H1 (cell line): ENCODE measurements at regions of chr2 and their contacts with region 1.

Region 1: DNA sequence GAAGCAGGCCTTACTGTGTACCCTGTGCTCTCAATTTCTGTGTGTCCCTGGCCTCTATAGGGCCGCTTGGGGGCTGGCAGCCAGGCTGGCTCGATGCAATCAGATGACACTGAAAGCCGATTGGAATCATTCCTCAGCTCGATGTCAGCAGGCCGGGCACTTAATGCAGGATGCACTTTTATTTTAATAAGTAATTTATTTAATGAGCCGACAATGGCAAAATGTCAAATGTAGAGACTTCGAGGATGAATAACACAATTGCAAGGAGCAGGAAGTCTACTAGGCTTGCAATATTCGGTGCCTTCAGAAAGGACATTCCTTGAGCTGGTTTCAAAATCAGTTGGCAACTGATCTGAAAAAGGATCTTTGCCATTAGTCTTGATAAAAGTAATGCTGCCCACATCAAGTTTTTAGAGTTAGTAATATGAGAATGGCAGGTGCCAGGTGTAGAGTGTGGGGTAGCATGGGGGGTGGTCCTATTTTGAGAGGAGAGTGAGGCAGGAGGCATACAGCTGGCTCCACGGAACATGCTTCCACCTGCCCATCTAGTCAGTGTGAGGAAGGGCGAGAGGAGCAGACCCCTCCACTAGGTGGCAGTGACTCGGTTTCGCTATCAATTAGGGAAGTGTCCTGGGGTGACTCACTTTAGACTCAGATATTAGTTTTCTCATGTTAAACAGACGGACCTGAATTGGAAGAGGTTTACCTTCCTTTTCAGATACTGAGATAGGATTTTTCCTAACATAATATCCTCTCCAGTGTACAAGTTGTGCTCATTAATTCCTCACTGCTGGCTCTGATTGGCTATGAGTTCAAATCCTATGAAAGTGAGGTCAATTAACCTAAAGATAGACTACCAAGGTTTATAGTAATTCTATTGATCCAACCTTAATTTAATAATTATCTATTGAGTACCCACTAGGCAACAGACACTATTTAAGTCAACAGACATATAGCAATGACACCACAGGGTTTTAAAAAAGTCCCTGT is 80.9 kb downstream of the NABP1 start:
- DNase-seq: peak; percentile 33 to 67
- H3K4me3 ChIP-seq: no peak overlapping the region
- H3K27ac ChIP-seq: no peak overlapping the region
- H3K4me1 ChIP-seq: peaks cover 0 to 3% (median 0%) of the 10 kb centered on the region in 4 experiments; a peak in 1 of 7 replicates
- H3K27me3 ChIP-seq: no peaks in the 10 kb centered on the region
- CTCF ChIP-seq: peak; percentile 58 to 93 (median 87)
- EP300 ChIP-seq: no peak
- POLR2A ChIP-seq: no peak
- RAD21 ChIP-seq: peak; percentile 51 to 60

Region 2: DNA sequence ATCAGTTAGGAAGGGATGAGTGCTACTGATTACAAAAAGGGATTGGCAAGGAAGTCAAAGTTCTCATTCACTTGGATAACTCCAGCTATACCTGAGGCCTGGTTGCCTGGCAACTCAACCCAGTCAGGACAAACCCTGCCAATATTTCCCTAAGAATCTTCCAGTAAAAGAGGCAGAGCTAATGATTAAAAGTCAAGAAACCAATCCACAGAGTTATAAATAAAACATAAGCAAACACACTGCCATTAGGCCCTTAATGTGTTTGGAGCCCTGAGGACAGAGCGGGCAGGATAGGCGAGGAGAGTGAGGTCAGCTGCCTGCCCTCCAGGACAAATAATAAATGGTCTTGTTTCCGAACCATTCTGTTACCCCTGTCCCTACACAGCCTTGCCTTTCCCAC is 296.4 kb before region 1 on chr2:
- CTCF ChIA-PET with region 1: no interaction called
- POLR2A ChIA-PET with region 1: no interaction called
- DNase-seq: no peak
- H3K4me3 ChIP-seq: no peak overlapping the region
- H3K27ac ChIP-seq: no peak overlapping the region
- H3K4me1 ChIP-seq: no peaks in the 10 kb centered on the region
- H3K27me3 ChIP-seq: no peaks in the 10 kb centered on the region
- CTCF ChIP-seq: no peak
- EP300 ChIP-seq: no peak
- POLR2A ChIP-seq: no peak
- RAD21 ChIP-seq: no peak

Region 3: GRCh38 chr2:191617575-191617974 is 141.2 kb before region 1 on chr2:
- CTCF ChIA-PET with region 1: no interaction called
- POLR2A ChIA-PET with region 1: no interaction called
- DNase-seq: no peak
- H3K4me3 ChIP-seq: no peak overlapping the region
- H3K27ac ChIP-seq: no peak overlapping the region
- H3K4me1 ChIP-seq: no peaks in the 10 kb centered on the region
- H3K27me3 ChIP-seq: no peaks in the 10 kb centered on the region
- CTCF ChIP-seq: no peak
- EP300 ChIP-seq: no peak
- POLR2A ChIP-seq: no peak
- RAD21 ChIP-seq: no peak

Region 4: GRCh38 chr2:191748059-191748461 is 10.8 kb before region 1 on chr2:
- CTCF ChIA-PET with region 1: interaction called, 14 read pairs
- POLR2A ChIA-PET with region 1: no interaction called
- DNase-seq: no peak
- H3K4me3 ChIP-seq: no peak overlapping the region
- H3K27ac ChIP-seq: no peak overlapping the region
- H3K4me1 ChIP-seq: no peaks in the 10 kb centered on the region
- H3K27me3 ChIP-seq: no peaks in the 10 kb centered on the region
- CTCF ChIP-seq: no peak
- EP300 ChIP-seq: no peak
- POLR2A ChIP-seq: no peak
- RAD21 ChIP-seq: no peak

Region 5: GRCh38 chr2:191777351-191777750 is 18.5 kb after region 1 on chr2:
- CTCF ChIA-PET with region 1: interaction called, 13 read pairs
- POLR2A ChIA-PET with region 1: no interaction called
- DNase-seq: no peak
- H3K4me3 ChIP-seq: no peak overlapping the region
- H3K27ac ChIP-seq: no peak overlapping the region
- H3K4me1 ChIP-seq: no peaks in the 10 kb centered on the region
- H3K27me3 ChIP-seq: no peaks in the 10 kb centered on the region
- CTCF ChIP-seq: no peak
- EP300 ChIP-seq: no peak
- POLR2A ChIP-seq: no peak
- RAD21 ChIP-seq: no peak